Posterior vena cava (tissue), 2 donors: ENCODE measurements at regions of chr7 and their contacts with region 1.

Region 1: DNA sequence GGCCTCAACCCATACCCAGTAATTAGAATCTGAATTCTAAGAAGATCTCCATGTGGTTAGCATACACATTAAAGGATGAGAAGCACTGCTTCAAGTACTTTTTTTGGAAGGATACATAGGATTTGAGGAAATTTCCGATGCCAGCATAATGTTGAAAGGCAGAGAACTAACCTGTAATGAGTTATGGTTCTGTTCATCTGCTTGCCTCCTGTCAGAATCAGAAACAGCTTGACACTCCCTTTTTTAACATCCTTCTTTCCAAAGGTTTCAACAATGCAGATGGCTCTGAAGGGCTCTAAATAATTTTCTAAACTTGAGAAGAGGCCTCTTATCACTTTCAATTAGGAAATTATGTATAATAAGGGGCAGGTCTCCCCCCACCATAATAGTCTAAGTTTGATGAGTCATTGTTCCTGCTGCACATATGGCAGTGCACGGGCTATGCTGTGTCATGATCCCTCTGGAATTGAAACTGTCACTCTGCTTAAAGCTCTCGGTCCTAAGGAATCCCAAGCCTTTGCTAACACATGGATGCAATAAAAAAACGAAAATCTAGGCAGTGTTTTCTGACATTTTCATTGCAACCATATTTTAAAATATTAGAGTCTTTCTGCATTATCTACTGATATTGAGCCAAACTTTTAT is 291.2 kb upstream of the FZD1 start:
- DNase-seq: no peak

Region 2: DNA sequence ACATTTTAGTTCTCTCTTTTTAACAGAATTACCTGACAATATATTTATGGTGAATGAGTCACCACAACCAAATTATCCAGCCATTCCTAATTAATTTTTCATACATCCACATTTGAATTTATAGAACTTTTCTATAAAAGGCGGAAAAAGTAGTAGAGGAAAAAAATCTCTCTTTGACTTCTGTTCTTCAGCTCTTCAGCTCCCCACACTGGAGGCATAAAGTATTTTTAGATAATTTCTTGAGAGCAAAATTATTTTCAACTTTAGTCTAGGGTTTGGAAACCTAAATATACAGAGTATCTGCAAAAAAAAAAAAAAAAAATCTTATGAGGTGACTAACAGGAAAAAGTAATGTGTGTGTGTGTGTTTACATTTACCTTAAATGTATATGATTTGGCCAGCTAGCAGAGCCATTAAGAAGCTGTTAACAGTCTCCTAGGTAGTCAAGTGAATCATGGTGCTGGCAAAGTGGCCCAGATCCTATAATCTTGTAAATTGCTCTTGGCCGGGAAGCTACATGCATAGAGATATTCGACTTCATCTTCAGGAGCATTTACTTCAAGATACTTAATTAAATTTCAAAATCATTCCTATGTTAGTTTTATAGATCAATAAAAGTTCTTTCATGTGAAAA is 1201.9 kb before region 1 on chr7:
- intact Hi-C with region 1: loop called in 1 of 2 experiments (anchors 10 kb)
- DNase-seq: no peak

Region 3: DNA sequence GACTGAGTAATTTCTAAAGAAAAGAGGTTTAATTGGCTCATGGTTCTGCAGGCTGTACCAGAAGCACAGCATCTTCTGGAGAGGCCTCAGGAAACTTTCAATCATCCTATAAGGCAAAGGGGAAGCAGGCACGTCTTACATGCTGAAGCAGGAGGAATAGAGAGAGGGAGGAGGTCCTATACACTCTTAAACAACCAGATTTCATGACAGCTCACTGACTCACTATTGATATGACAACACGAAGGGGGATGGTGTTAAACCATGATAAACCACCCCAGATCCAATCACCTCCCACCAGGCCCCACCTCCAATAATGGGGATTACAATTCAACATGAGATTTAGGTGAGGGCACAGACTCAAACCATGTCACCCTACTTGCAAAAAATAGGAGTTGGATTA is 175.4 kb before region 1 on chr7:
- intact Hi-C with region 1: no loop called
- DNase-seq: no peak

Region 4: DNA sequence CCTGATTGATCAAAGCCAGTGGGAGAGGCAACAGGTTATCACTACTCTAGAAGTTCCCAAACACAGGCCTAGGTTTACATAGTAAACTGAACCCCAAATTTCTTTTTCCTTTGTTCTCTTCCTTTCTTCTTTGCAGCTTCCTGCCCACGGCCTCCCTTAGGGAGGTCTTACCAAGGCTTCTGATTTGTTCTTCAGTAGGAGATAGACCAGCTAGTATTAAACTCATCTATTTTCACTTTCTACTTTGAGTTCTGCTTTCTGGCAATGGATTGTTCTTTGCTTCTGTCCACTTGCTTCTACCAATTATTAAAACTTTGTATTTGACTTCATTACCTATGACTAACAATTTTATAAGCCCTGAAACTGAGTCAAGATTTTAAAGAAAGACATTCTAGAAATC is 40.0 kb after region 1 on chr7:
- intact Hi-C with region 1: no loop called
- DNase-seq: no peak

Region 5: DNA sequence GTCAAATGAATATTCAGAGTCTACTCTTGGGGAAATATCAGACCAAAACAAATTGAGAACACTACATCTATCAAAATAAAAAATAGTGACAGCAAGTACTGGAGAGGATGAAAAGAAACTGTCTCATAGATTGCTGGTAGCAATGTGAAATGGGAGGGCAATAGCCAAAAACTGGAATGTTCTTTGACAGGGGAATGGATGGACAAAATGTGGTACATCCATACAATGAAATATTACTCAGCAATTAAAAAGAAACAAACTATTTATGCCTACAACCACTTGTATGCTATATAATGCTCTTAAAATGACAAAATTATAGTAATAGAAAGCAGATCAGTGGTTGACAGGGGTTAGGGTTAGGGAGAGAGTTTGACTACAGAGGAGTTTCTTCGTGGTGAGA is 1115.2 kb after region 1 on chr7:
- intact Hi-C with region 1: no loop called
- DNase-seq: no peak